Activated CD4-positive, alpha-beta T cell treated with anti-CD3 and anti-CD28 coated beads, Interleukin-2, amount 10 ng/mL, durations not matched to agents 24 days and 14 days (primary cell): ENCODE measurements at regions of chr12 and their contacts with region 1.

Region 1: DNA sequence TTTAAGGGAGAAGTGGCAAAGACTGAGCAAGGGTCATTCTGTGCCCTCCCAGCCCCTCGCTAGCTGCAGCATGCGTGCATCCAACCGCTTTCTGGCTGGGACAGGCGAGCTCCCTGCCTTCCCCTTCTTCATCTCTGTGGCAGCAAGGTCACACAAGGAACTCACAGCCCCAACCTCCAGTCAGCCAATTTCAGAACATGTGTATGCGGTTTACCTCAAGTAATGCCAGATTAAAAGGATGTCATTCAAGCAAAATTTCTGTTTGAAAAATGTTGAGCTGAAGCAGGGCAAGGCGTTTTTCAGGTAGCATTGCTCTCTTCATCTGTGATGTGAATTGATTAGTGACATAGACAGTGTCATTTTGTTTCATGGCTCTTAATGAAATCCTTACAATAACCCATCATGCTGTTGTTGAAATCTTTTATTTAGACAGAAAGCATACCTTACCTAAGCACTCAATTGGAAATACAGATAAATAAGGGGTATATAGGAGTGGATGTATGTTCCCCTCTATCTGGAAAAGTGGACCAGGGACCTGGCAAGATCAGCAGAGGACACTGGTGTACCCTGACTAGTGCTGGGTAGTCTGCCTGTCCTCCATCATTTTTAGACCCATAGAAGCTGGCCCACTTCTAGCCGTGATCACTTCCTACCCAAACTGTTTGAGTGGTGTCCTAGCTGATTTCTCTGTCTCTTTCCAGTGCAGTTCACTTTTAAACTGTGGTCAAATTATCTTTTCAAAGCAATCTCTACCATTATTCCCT is 82.8 kb upstream of the NEDD1 start:
- DNase-seq: peak; percentile 60
- H3K4me3 Mint-ChIP-seq: no peak overlapping the region
- H3K27ac Mint-ChIP-seq: no peak overlapping the region
- H3K4me1 Mint-ChIP-seq: no peaks in the 10 kb centered on the region
- H3K27me3 Mint-ChIP-seq: peaks cover 5% of the 10 kb centered on the region

Region 2: DNA sequence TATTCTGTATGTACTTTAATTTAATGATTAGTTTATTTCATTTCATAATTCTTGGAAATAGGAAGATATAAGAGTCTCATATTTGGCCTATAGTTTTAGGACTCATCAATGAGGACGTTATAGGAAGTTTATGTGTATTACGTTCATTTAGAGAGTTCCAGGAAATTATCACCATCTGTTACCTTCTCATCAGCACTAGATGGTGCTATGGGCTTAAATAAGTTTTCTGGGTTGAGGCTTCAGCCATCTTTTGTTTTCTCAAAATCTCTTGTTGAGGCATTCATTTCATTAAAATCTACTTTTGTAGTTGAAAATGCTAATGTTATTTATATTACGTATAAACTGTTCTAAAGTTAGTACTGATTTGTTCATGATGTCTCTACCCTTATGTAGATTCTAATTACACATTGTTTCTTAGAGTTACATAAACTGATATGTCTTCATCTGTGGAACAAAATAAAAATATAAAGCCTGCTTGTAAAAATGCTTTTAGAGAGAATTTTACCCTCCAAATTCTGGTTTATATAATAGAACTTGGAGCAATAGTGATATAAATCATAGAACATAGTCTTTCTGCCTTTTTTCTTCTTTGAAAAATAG is 245.6 kb before region 1 on chr12:
- intact Hi-C with region 1: loop called (anchors 5 kb)
- DNase-seq: peak; percentile 74
- H3K4me3 Mint-ChIP-seq: no peak overlapping the region
- H3K27ac Mint-ChIP-seq: no peak overlapping the region
- H3K4me1 Mint-ChIP-seq: no peaks in the 10 kb centered on the region
- H3K27me3 Mint-ChIP-seq: peaks cover 11% of the 10 kb centered on the region